ENCODE measurements at regions of chr22 and their contacts with region 1.

Region 1: DNA sequence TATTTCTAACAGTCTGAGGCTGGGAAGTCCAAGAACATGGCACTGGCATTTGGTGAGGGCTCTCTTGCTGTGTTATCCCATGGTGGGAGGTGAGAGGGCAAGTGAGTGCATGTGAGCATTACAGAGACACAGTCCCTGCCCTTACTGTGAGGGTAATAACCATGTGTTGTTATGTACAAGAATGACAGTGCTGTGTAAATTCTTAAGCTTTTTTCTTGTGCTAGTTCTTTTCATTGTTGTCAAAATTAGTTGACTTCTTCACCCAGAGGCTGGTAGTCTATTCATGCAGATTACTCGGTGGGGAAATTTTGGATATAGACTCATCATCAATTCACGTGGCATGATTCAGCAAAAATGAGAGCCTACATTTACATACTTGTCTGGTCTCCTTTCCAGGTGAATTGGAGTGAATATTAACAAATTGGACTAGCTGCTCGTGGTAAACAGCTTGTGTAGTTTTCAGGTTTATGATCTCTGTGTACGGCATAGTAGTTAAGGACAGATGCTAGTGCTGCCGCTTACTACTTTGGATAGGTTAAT is 49.3 kb downstream of the ATXN10 start:
- DNase-seq: no peak
- ATAC-seq: no peak
- H3K4me3 ChIP-seq: no peak overlapping the region
- H3K27ac ChIP-seq: no peak overlapping the region
- H3K4me1 ChIP-seq: no peaks in the 10 kb centered on the region
- H3K27me3 ChIP-seq: no peaks in the 10 kb centered on the region
- CTCF ChIP-seq: no peak

Region 2: GRCh38 chr22:45667486-45667885 is 53.4 kb before region 1 on chr22:
- CTCF ChIA-PET with region 1: no interaction called
- POLR2A ChIA-PET with region 1: interaction called, 15 read pairs
- in situ Hi-C with region 1: no loop called
- intact Hi-C with region 1: no loop called
- DNase-seq: no peak
- ATAC-seq: no peak
- H3K4me3 ChIP-seq: no peak overlapping the region
- H3K27ac ChIP-seq: no peak overlapping the region
- H3K4me1 ChIP-seq: no peaks in the 10 kb centered on the region; the same call in 1 of the 2 replicates
- H3K27me3 ChIP-seq: no peaks in the 10 kb centered on the region
- CTCF ChIP-seq: no peak